BJ (cell line): ENCODE measurements at regions of chr17 and their contacts with region 1.

Region 1: GRCh38 chr17:63919311-63919723 is 678 bp upstream of the GH1 start:
- DNase-seq: no peak
- H3K4me3 ChIP-seq: no peak overlapping the region
- H3K27me3 ChIP-seq: peaks cover 4% of the 10 kb centered on the region; the same call in 1 of the 2 replicates
- CTCF ChIP-seq: peak; percentile 92

Region 2: GRCh38 chr17:63332286-63332685 is 587.0 kb before region 1 on chr17:
- CTCF ChIA-PET with region 1: no interaction called
- POLR2A ChIA-PET with region 1: no interaction called
- DNase-seq: no peak
- H3K4me3 ChIP-seq: no peak overlapping the region
- H3K27me3 ChIP-seq: no peaks in the 10 kb centered on the region
- CTCF ChIP-seq: no peak

Region 3: DNA sequence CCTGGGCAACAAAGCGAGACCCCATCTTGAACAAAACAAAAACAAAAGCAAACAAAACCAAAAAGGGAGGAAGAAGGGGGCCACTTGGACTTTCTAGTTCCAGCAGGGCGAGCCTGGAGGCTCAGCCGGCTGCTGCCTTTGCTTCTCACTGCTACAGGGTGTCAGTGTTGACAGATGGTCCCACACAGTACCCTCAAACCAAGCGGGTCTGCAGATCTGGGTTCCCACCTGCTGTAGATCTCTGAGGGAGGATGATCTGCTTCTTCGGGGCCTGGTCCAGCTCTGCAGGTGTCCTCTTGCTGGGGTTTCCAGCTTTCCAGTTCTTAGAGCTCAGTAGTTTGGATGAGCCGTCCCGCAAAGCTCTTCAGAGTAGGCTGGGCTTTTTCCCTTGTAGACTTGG is 15.0 kb before region 1 on chr17:
- CTCF ChIA-PET with region 1: interaction called, 53 read pairs
- POLR2A ChIA-PET with region 1: no interaction called
- DNase-seq: no peak
- H3K4me3 ChIP-seq: no peak overlapping the region
- H3K27me3 ChIP-seq: peaks cover 2% of the 10 kb centered on the region; the same call in 1 of the 2 replicates
- CTCF ChIP-seq: no peak

Region 4: GRCh38 chr17:63939884-63940283 is 20.6 kb after region 1 on chr17:
- CTCF ChIA-PET with region 1: interaction called, 84 read pairs
- POLR2A ChIA-PET with region 1: no interaction called
- DNase-seq: no peak
- H3K4me3 ChIP-seq: no peak overlapping the region
- H3K27me3 ChIP-seq: peaks cover 2% of the 10 kb centered on the region; the same call in 1 of the 2 replicates
- CTCF ChIP-seq: no peak

Region 5: GRCh38 chr17:63984651-63985386 is 65.5 kb after region 1 on chr17:
- CTCF ChIA-PET with region 1: interaction called, 53 read pairs
- POLR2A ChIA-PET with region 1: no interaction called
- DNase-seq: peak; percentile 54
- H3K4me3 ChIP-seq: no peak overlapping the region
- H3K27me3 ChIP-seq: peaks cover 4% of the 10 kb centered on the region
- CTCF ChIP-seq: no peak

Region 6: DNA sequence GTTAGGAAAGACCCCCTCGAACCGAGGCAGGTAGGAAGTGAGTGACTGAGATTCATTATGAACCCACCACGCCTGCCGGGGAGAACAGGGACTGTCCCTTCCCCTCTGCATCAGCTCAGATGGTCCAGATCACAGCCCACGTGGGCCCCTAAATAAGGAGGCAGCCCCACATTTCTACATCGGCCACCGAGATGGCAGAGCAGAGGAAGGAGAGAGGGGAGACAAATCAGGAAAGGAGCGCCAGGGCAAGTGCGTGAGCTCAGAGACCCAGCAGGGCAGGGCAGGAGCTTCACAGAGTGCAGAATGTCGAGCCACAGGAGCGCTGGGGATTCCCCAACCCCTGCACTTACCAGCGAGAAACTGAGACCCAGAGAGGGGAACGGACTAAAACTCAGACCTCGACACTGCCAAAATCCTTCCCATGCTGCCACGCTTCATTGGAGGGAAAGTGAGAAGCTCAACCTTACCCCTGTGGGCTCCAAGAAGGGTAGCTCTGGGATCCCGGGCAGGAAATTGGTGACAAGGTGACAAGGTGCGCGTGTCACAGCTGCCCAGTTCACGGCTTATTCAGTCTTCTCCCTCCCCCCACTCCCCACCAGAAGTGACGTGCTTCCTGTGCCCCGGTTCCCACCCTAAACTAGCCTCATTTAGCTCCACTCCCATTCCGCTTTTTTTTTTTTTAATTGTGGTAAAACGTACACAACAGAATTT is 100.9 kb after region 1 on chr17 and contains the start of gene ICAM2:
- CTCF ChIA-PET with region 1: interaction called, 139 read pairs
- POLR2A ChIA-PET with region 1: no interaction called
- DNase-seq: no peak
- H3K4me3 ChIP-seq: peak within 1 kb of the TSS; percentile 21
- H3K27me3 ChIP-seq: no peaks in the 10 kb centered on the region
- CTCF ChIP-seq: no peak
- polyA plus RNA-seq, gene ICAM2: 0.91 and 1.6 TPM in 2 replicates